Activated CD4-positive, alpha-beta memory T cell treated with anti-CD3 and anti-CD28 coated beads, Interleukin-2, amount 10 ng/mL, durations not matched to agents 7 days and 5 days (primary cell): ENCODE measurements at regions of chr4 and their contacts with region 1.

Region 1: GRCh38 chr4:122632396-122633143 is 11.7 kb upstream of the IL21 start:
- DNase-seq: no peak
- H3K4me3 Mint-ChIP-seq: no peak overlapping the region
- H3K27ac Mint-ChIP-seq: no peak overlapping the region
- H3K4me1 Mint-ChIP-seq: peaks cover 39% of the 10 kb centered on the region
- H3K27me3 Mint-ChIP-seq: no peaks in the 10 kb centered on the region

Region 2: GRCh38 chr4:122619611-122620010 is 13.0 kb before region 1 on chr4:
- CTCF ChIA-PET with region 1: interaction called, 6 read pairs
- POLR2A ChIA-PET with region 1: interaction called, 18 read pairs
- DNase-seq: no peak
- H3K4me3 Mint-ChIP-seq: peak overlapping the region; percentile 69
- H3K27ac Mint-ChIP-seq: peak overlapping the region; percentile 67
- H3K4me1 Mint-ChIP-seq: peaks cover 46% of the 10 kb centered on the region
- H3K27me3 Mint-ChIP-seq: no peaks in the 10 kb centered on the region

Region 3: DNA sequence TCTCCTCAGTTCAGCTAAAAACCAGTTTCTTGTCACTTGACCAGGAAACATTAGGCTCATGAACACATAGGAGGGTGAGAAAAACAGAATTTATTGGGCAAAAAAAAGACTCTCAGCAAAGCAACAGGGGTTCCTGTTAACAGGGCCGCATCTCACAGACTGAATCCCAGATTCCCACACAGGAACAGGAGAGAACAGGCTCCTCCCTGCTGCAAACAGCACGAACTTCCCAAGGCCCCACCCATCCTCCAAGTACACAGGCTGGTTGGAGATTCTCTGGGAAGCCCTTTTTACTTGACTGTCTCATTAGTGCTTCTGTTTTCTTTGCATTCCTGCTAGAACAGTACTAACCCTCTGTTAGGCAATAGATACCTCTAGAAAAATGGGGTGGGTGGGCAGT is 40.7 kb after region 1 on chr4:
- CTCF ChIA-PET with region 1: no interaction called
- POLR2A ChIA-PET with region 1: no interaction called
- DNase-seq: no peak
- H3K4me3 Mint-ChIP-seq: no peak overlapping the region
- H3K27ac Mint-ChIP-seq: no peak overlapping the region
- H3K4me1 Mint-ChIP-seq: peaks cover 34% of the 10 kb centered on the region
- H3K27me3 Mint-ChIP-seq: peaks cover 14% of the 10 kb centered on the region